Breast epithelium (tissue), 4 donors: ENCODE measurements at regions of chr12 and their contacts with region 1.

Region 1: GRCh38 chr12:49974231-49974675 is 1.5 kb downstream of the AQP6 start:
- DNase-seq: no peak
- H3K4me3 ChIP-seq: no peak overlapping the region
- H3K27ac ChIP-seq: no peak overlapping the region
- H3K4me1 ChIP-seq: no peaks in the 10 kb centered on the region
- H3K27me3 ChIP-seq: no peaks in the 10 kb centered on the region
- CTCF ChIP-seq: peak in 2 of 3 donors; percentile 17 to 46
- POLR2A ChIP-seq: no peak

Region 2: DNA sequence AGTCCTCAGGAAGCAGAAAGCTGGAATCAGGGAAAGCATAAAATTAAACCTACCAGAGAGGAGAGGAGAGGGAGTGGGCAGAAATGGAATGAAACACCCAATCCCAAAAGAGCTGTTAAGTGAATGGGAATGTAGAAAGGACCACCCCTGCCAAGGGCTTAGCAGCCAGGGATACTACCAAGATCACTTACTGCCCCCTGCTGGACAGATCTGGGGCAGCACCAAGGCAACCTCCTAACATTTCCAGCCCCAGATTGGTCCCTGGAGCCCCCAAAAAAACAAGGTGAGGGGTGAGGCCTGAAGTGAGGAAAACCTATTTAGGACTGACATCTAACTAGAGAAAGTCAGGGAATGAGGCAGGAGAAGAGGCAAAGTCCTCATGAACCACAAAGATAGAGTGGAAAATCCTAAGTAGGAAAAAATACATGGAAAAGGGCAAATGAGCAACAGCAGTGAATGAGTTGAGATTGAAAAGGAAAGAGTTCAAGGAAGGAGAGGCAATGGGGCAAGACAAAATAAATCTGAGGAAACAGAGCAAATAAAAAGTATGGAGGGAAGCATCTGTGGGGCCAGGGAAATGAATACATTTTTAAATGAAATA is 1037.8 kb before region 1 on chr12:
- intact Hi-C with region 1: no loop called
- DNase-seq: peak; percentile 24 to 66
- H3K4me3 ChIP-seq: no peak overlapping the region
- H3K27ac ChIP-seq: no peak overlapping the region
- H3K4me1 ChIP-seq: no peaks in the 10 kb centered on the region
- H3K27me3 ChIP-seq: no peaks in the 10 kb centered on the region
- CTCF ChIP-seq: peak; percentile 21 to 59 (median 54)
- POLR2A ChIP-seq: no peak

Region 3: DNA sequence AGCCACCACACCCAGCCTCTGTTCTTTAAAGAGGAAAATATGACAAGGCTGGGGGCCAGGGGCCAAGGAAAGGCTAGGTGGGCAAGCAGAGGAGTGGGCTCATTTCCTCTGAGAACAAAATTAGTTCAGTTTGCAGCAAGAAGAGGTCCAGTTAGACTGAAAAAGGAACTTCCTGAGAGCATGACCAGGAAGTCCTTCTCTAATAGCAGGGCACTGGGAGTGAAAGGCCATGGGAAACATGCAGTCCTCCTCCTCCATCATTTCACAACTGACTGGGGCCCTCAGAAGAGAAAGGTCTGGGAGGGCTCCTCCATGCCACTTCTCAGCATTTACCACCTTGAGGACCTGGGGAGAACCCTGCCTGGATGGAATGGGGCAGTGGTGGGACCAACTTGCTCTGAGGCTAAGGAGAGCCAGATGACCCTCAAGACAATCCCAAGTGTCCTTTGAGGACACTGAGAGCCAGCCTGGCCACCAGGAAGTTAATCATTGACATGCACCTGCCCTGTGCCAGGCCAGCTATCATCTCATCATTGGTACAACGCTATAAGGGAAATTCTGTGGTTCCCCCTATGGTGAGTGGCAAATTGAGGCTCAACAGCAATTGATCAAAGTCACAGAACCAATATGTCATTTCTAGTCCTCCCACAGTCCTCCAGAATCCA is 21.7 kb before region 1 on chr12:
- intact Hi-C with region 1: loop called (anchors 1 kb)
- DNase-seq: peak in 1 of 2 donors; percentile 38
- H3K4me3 ChIP-seq: no peak overlapping the region
- H3K27ac ChIP-seq: no peak overlapping the region
- H3K4me1 ChIP-seq: peaks cover 0 to 4% of the 10 kb centered on the region in 2 donors
- H3K27me3 ChIP-seq: peaks cover 4 to 20% of the 10 kb centered on the region in 2 donors
- CTCF ChIP-seq: no peak
- POLR2A ChIP-seq: no peak